Testis (tissue), 5 donors: ENCODE measurements at regions of chr17 and their contacts with region 1.

Region 1: DNA sequence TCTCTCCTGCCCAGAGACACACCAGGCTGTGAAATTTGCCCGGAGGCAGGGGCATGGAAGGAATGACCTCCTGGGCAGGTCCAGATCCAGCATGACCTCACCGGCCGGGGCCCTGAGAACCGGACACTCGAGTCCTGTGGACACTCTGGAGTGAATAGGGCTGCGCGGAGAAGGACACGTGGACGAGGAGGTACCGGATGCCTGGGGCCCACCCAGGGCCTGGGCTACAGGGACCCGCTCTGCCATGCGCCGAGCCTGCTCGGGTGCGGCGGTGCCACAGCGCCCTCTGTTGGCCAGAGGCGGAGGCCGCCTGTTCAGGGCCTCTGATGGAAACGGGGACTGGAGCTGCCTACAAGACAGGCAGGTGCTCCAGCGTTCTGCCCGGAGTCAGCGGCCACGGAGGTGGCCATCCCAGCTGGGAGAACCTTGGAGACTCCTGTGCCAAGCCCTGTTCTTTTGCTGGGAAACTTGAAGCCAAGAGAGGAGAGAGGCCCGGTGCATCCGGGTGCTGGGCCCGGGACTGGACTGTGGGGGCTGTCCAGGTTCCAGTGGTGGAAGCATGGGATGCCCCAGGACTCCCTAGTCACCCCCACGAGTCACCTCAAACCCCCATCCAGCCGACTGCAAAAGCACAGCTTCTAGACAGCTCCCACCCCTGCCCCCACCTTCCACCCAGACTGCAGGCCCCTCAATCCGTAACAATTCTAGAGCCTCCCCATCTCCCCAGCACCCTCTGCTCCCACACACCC is 19.3 kb upstream of the NXPH3 start:
- DNase-seq: peak; percentile 86
- H3K4me3 ChIP-seq: no peak overlapping the region
- H3K27ac ChIP-seq: no peak overlapping the region
- H3K4me1 ChIP-seq: peaks cover 17% of the 10 kb centered on the region
- H3K27me3 ChIP-seq: no peaks in the 10 kb centered on the region
- CTCF ChIP-seq: peak; percentile 91 to 98 (median 94)
- POLR2A ChIP-seq: no peak

Region 2: DNA sequence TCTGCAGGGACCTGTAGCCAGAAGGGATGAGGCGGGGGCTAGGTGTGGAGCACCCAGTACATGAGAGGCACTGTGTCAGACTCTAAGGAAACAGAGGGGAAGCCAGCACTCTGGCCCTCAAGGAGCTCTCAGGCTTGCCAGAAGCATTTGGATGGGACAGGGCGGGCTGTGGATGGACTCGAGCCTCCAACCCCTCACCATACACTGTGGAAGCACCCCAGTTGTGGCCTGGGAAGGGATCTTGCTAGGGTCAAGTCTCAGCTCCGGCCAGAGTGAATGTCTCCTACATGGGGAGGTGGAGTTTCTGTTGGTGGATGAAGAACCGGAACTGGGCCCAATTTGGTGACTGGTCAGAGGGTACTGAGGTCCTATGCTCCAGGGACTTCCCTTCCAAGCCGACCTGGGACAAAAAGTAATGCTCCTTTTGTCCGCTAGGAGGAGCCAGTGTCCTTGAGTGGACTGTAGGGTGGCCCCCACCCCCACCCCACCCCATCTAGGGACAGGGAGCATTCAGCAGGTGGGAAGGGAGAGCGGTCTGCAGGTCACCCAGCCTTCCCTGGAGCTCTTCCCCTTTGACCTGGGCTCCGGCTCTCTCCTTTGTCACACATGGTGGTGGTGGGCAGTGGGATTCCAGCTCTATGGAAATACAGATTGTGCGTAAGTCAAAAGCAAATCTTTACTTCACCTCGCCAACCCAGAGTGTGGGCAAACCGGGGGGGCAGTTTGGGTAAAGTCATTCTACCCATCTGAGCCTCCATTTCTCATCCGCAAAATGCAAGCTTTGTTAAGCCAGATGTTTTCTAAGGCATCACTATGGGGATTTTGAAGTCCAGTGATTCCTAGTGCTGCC is 121.4 kb before region 1 on chr17:
- intact Hi-C with region 1: loop called (anchors 10 kb)
- DNase-seq: peak; percentile 67
- H3K4me3 ChIP-seq: no peak overlapping the region
- H3K27ac ChIP-seq: no peak overlapping the region
- H3K4me1 ChIP-seq: no peaks in the 10 kb centered on the region
- H3K27me3 ChIP-seq: no peaks in the 10 kb centered on the region
- CTCF ChIP-seq: peak in 2 of 3 experiments; percentile 53 to 80
- POLR2A ChIP-seq: no peak

Region 3: DNA sequence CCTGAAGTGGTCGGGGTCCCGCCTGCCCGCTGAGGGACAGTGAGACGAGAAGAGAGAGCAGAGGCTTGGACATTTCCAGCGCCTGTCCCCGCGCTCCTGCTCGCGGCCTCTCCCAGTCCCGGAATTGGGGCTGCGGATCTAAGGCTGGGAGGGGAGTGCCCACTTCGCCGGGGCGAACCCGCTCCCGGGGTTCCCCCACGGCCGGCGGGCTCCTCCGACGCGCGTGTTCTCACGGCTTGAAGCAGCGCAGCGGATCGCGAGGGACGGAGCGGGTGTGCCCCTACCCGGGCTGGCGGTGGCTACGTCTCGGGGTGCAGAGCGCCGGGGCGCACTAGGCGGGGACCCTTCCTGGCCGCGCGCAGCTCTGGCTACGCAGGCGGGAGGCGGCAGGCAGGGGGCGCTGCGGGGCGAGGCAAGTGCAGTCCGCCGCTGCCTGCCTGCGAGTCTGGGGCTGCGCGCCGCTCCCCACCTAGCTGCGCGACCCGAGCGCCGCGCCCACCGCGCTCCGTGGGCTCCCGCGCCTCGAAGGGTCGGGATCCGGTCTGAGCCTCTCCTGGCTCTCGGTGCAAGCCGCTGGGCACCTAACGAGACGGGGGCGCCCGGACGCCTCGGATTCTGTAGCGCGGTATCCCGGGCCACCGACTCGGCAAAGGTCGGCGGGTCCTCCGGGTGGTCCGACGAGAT is 60.1 kb before region 1 on chr17:
- intact Hi-C with region 1: loop called (anchors 5 kb)
- DNase-seq: peak; percentile 89
- H3K4me3 ChIP-seq: peak overlapping the region; percentile 45 to 52
- H3K27ac ChIP-seq: no peak overlapping the region
- H3K4me1 ChIP-seq: peaks cover 24% of the 10 kb centered on the region
- H3K27me3 ChIP-seq: no peaks in the 10 kb centered on the region
- CTCF ChIP-seq: peak; percentile 82 to 92 (median 90)
- POLR2A ChIP-seq: no peak